ENCODE measurements at regions of chr5 and their contacts with region 1.

Region 1: GRCh38 chr5:168219515-168220410 is 71.7 kb upstream of the WWC1 start:
- DNase-seq: peak; percentile 72
- H3K4me3 Mint-ChIP-seq: no peak overlapping the region
- H3K27ac Mint-ChIP-seq: no peak overlapping the region
- H3K4me1 Mint-ChIP-seq: peaks cover 17% of the 10 kb centered on the region
- H3K27me3 Mint-ChIP-seq: peaks cover 93% of the 10 kb centered on the region
- CTCF ChIP-seq: peak; percentile 83

Region 2: GRCh38 chr5:167723254-167723871 is 496.4 kb before region 1 on chr5:
- CTCF ChIA-PET with region 1: interaction called, 5 read pairs
- intact Hi-C with region 1: loop called (anchors 1 kb)
- DNase-seq: peak; percentile 82
- H3K4me3 Mint-ChIP-seq: no peak overlapping the region
- H3K27ac Mint-ChIP-seq: peak overlapping the region; percentile 45
- H3K4me1 Mint-ChIP-seq: peaks cover 11% of the 10 kb centered on the region
- H3K27me3 Mint-ChIP-seq: no peaks in the 10 kb centered on the region
- CTCF ChIP-seq: peak; percentile 94

Region 3: DNA sequence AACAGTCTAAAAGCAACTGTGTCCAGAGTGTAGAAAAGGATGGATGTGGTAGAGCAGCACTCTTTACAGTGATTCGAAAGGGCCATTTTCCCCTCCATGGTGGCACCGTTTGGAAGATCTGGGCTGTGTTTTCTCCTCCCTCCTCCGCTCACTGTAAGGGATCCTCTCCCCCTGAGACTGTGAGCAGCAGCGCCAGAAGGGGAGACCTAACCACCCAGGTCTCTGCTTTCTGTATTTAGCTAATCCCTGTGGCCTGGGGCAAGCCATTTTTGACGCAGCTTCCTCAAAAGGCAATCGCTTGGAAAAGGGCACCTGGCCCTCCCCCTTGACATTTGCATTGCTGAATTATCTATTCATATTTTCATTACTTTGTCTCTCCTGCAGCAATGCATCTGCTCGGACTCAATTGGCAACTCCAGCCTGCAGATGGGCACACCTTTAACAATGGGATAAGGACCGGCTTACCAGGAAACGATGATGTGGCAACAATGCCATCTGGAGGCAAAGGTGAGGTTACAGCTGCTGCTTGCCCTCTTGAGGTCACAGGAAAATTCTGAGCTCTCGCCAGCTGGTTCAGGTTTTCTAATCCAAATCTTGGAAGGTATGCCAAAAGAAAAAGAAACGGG is 172.6 kb before region 1 on chr5:
- CTCF ChIA-PET with region 1: interaction called, 13 read pairs
- intact Hi-C with region 1: no loop called
- DNase-seq: peak; percentile 71
- H3K4me3 Mint-ChIP-seq: no peak overlapping the region
- H3K27ac Mint-ChIP-seq: no peak overlapping the region
- H3K4me1 Mint-ChIP-seq: peaks cover 12% of the 10 kb centered on the region
- H3K27me3 Mint-ChIP-seq: peaks cover 90% of the 10 kb centered on the region
- CTCF ChIP-seq: peak; percentile 64

Region 4: DNA sequence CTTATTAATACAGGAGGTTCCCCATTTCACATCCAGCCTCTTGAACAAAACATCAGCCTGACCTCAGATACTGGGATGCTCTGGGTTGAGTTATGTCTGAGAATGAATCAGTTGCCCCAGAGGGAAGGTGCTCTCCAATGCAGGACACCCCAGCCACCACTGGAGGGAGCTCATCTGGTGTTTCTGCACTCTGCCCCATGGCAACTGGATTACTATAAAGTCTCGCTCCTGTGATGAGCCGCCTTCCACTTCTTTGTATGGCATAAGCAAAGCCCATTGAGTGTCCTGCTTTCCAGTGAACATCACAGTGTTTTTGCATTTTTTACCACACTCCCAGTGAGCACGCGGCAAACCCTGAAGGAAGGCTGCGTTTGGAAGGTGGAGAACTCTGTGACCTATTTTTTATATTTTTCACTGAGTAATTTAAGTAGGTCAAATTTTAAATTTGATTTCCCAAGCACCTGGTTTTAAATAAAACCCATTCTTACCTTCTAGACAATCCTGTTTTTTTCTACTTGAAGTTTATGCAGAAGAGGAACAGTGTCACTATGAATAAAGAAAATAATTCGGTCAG is 105.2 kb before region 1 on chr5:
- CTCF ChIA-PET with region 1: interaction called, 21 read pairs
- intact Hi-C with region 1: loop called (anchors 1 kb)
- DNase-seq: peak; percentile 90
- H3K4me3 Mint-ChIP-seq: no peak overlapping the region
- H3K27ac Mint-ChIP-seq: no peak overlapping the region
- H3K4me1 Mint-ChIP-seq: no peaks in the 10 kb centered on the region
- H3K27me3 Mint-ChIP-seq: peaks cover 59% of the 10 kb centered on the region
- CTCF ChIP-seq: peak; percentile 78

Region 5: DNA sequence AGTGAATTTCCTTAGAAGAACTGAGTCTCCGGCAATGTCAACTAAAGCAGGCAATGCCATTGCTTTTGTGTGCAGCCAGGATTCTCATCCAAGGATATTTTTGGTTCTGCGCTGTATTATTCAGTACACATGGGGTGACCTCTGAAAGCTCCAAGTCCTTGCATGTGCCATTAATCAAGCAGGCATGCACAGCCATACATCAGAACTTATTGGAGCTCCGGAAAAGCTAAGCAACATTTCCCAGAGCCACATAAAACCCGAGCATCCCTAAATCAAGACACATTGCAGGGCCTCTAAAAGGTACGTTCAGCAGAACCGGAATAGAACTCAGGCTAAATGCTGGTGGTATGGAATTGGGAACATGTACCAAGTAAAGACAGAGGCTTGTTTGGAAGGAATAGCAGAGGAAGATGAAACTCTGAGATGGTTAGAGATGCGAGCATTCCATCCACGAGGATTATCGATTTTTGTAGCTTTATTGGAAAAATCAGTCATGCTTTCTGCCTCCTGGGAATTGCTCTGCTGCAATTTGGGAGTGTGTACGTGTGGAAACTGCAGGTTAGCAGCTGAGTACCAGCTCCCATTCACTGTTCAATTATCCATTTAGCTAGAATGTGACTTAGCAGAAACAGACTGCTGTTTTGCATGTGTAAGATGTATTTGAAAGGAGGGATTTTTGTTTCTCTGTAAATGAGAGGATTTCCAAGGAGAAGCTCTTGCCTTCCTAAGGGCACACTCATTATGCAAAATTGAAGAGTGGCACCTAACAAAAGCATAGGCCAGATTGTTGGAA is 72.0 kb before region 1 on chr5:
- CTCF ChIA-PET with region 1: no interaction called
- intact Hi-C with region 1: no loop called
- DNase-seq: no peak
- H3K4me3 Mint-ChIP-seq: no peak overlapping the region
- H3K27ac Mint-ChIP-seq: no peak overlapping the region
- H3K4me1 Mint-ChIP-seq: no peaks in the 10 kb centered on the region
- H3K27me3 Mint-ChIP-seq: peaks cover 78% of the 10 kb centered on the region
- CTCF ChIP-seq: no peak

Region 6: DNA sequence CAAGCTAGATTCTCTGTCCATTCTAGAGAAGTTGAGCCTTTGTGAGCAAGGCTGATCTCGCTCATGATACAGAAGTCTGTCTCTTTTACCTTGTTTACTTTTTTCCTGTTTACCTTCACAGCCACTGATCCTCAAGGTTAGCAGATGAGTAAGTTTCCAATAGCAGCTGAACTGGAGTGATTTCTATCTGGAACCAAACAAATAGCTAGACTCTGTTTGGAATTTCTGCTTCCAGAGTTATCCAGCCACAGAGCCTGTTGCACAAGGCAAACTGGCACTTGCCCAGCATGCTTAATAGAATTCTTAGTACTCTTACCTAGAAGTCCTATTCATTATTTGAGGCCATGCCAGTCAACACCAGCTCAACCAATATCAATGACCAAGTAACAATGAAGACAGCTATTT is 372.3 kb after region 1 on chr5:
- CTCF ChIA-PET with region 1: no interaction called
- intact Hi-C with region 1: no loop called
- DNase-seq: no peak
- H3K4me3 Mint-ChIP-seq: no peak overlapping the region
- H3K27ac Mint-ChIP-seq: no peak overlapping the region
- H3K4me1 Mint-ChIP-seq: no peaks in the 10 kb centered on the region
- H3K27me3 Mint-ChIP-seq: peaks cover 46% of the 10 kb centered on the region
- CTCF ChIP-seq: no peak